Sigmoid colon (tissue), 7 donors: ENCODE measurements at regions of chr1 and their contacts with region 1.

Region 1: GRCh38 chr1:8848663-8849386 is 29.7 kb downstream of the ENO1 start:
- DNase-seq: peak; percentile 97
- H3K4me3 ChIP-seq: no peak overlapping the region
- H3K27ac ChIP-seq: peak overlapping the region; percentile 54 to 75 (median 71)
- H3K4me1 ChIP-seq: peaks cover 0 to 21% (median 6%) of the 10 kb centered on the region in 4 donors
- H3K27me3 ChIP-seq: no peaks in the 10 kb centered on the region
- CTCF ChIP-seq: peak; percentile 57 to 92 (median 88)
- EP300 ChIP-seq: peak in 2 of 4 donors; percentile 14 to 51
- POLR2A ChIP-seq: no peak

Region 2: GRCh38 chr1:8465013-8465412 is 383.8 kb before region 1 on chr1:
- intact Hi-C with region 1: loop called (anchors 2 kb)
- DNase-seq: no peak
- H3K4me3 ChIP-seq: no peak overlapping the region
- H3K27ac ChIP-seq: peak overlapping the region; percentile 77 to 86 (median 84)
- H3K4me1 ChIP-seq: peaks cover 0 to 73% (median 65%) of the 10 kb centered on the region in 4 donors
- H3K27me3 ChIP-seq: no peaks in the 10 kb centered on the region
- CTCF ChIP-seq: no peak
- EP300 ChIP-seq: no peak
- POLR2A ChIP-seq: no peak